Gastrocnemius medialis (tissue), 4 donors: ENCODE measurements at regions of chr11 and their contacts with region 1.

Region 1: DNA sequence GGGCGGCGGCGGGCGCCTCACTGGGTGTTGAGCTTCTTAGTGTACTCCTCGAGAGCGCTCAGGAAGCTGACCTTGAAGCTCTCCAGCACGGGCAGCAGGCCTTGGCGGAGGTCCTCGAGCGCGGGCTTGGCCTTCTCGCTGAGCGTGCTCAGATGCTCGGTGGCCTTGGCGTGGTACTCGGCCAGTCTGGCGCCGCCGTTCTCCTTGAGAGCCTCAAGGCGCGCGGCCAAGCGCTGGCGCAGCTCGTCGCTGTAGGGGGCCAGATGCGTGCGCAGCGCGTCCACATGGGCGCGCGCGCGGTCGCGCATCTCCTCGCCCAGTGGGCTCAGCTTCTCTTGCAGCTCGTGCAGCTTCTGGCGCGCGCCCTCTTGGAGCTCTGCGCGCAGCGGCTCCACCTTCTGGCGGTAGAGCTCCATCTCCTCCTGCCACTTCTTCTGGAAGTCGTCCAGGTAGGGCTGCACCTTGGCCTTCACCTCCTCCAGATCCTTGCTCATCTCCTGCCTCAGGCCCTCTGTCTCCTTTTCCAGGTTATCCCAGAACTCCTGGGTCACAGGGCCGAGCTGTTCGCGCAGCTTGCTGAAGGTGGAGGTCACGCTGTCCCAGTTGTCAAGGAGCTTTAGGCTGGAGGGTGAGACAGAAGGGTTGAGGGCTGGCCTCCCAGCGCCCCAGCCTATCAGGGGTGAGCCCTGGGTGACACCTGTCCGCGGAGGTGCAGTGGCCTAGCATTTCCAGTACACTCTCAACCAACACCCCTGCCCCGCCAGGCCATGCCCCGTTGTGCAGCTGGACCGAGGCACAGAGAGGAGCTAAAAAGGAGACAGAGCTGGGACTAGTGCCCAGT is 1.4 kb downstream of the APOA1 start:
- DNase-seq: peak; percentile 65 to 87
- ATAC-seq: peak; percentile 78 to 82
- H3K4me3 ChIP-seq: peak overlapping the region; percentile 43 to 55 (median 44)
- H3K27ac ChIP-seq: peak overlapping the region; percentile 63 to 70 (median 66)
- H3K4me1 ChIP-seq: peaks cover 10 to 14% of the 10 kb centered on the region in 2 donors
- H3K27me3 ChIP-seq: no peaks in the 10 kb centered on the region
- CTCF ChIP-seq: peak; percentile 34 to 70 (median 63)
- POLR2A ChIP-seq: no peak

Region 2: GRCh38 chr11:116641561-116642045 is 194.4 kb before region 1 on chr11:
- in situ Hi-C with region 1: no loop called
- intact Hi-C with region 1: no loop called
- DNase-seq: peak in 1 of 2 donors; percentile 18
- ATAC-seq: peak; percentile 19 to 30
- H3K4me3 ChIP-seq: no peak overlapping the region
- H3K27ac ChIP-seq: no peak overlapping the region
- H3K4me1 ChIP-seq: no peaks in the 10 kb centered on the region
- H3K27me3 ChIP-seq: peaks cover 0 to 5% (median 0%) of the 10 kb centered on the region in 3 donors
- CTCF ChIP-seq: peak; percentile 48 to 71 (median 64)
- POLR2A ChIP-seq: no peak

Region 3: GRCh38 chr11:116732271-116733042 is 103.6 kb before region 1 on chr11:
- in situ Hi-C with region 1: no loop called
- intact Hi-C with region 1: no loop called
- DNase-seq: peak in 1 of 2 donors; percentile 33
- ATAC-seq: peak; percentile 41 to 59
- H3K4me3 ChIP-seq: no peak overlapping the region
- H3K27ac ChIP-seq: no peak overlapping the region
- H3K4me1 ChIP-seq: peaks cover 7 to 14% of the 10 kb centered on the region in 2 donors
- H3K27me3 ChIP-seq: no peaks in the 10 kb centered on the region
- CTCF ChIP-seq: peak; percentile 45 to 82 (median 63)
- POLR2A ChIP-seq: no peak

Region 4: GRCh38 chr11:116869610-116870009 is 33.6 kb after region 1 on chr11:
- in situ Hi-C with region 1: no loop called
- intact Hi-C with region 1: loop called (anchors 1 kb)
- DNase-seq: no peak
- ATAC-seq: no peak
- H3K4me3 ChIP-seq: no peak overlapping the region
- H3K27ac ChIP-seq: no peak overlapping the region
- H3K4me1 ChIP-seq: peaks cover 30 to 46% of the 10 kb centered on the region in 2 donors
- H3K27me3 ChIP-seq: no peaks in the 10 kb centered on the region
- CTCF ChIP-seq: no peak
- POLR2A ChIP-seq: no peak

Region 5: DNA sequence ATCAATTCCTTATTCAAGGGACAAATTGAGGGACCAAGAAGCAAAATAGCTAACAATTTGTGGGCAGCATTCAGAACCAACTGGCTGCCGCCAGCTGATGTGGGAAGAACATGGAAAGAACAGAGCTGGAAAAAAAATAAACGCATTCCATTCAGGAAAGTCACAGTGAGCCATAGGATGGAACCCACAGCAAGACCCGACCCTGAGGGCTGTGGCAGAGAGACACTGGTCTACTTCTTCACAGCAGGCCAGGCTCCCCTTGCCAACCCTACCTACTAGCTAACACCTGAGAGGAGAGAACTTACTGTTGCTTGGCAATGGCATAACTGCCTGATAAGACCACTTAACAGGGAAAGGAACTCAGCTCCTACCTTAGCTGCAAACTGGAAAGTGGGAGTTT is 124.9 kb after region 1 on chr11:
- in situ Hi-C with region 1: no loop called
- intact Hi-C with region 1: no loop called
- DNase-seq: no peak
- ATAC-seq: no peak
- H3K4me3 ChIP-seq: no peak overlapping the region
- H3K27ac ChIP-seq: no peak overlapping the region
- H3K4me1 ChIP-seq: peaks cover 34 to 42% of the 10 kb centered on the region in 2 donors
- H3K27me3 ChIP-seq: no peaks in the 10 kb centered on the region
- CTCF ChIP-seq: no peak
- POLR2A ChIP-seq: no peak